Gastrocnemius medialis (tissue), 4 donors: ENCODE measurements at regions of chr1 and their contacts with region 1.

Region 1: DNA sequence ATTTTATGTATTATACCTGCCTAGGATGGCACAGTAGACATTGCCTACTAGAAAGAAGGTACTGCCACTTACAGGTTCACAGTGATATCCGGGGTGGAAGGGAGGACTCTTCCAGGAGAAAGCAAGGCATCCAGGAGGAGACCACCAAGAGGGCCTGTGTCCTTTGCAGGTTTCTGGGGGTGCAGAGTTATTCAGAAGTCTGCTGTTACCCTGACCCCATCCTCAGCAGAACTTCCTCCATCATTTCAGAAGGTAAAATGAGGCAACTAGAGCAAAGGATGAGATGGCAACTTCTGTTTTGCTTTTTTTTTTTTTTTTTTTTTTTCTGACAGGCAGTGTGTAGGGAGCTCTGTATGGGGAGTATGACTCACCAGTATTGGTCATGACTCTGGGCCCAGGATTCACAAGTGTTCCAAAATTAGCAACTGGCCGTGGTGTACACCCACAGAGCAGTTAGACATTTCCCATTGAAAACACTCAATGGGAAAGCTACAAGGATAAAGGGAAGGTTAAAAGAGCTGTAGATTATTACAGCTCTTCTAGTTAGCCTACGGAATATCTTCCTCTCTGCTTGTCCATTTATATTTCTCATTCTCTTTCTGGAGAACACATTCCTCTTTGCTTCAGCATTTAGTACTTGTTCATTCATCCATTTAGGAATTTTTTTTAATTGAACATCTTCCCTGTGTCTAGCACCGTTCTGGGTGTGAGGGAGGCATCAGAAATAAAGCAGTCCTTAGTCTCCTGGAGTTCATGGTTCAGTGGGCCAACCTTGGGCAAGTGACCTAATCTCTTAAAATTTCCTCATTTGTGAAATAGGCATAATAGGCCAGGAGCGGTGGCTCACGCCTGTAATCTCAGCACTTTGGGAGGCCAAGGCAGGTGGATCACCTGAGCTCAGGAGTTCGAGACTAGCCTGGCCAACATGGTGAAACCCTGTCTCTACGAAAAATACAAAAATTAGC is 50.5 kb upstream of the PPP2R5A start:
- DNase-seq: peak; percentile 74 to 82
- ATAC-seq: peak; percentile 96 to 97
- H3K4me3 ChIP-seq: no peak overlapping the region
- H3K27ac ChIP-seq: peak overlapping the region; percentile 80 to 90 (median 87)
- H3K4me1 ChIP-seq: peaks cover 35 to 51% of the 10 kb centered on the region in 2 donors
- H3K27me3 ChIP-seq: no peaks in the 10 kb centered on the region
- CTCF ChIP-seq: no peak
- POLR2A ChIP-seq: no peak

Region 2: DNA sequence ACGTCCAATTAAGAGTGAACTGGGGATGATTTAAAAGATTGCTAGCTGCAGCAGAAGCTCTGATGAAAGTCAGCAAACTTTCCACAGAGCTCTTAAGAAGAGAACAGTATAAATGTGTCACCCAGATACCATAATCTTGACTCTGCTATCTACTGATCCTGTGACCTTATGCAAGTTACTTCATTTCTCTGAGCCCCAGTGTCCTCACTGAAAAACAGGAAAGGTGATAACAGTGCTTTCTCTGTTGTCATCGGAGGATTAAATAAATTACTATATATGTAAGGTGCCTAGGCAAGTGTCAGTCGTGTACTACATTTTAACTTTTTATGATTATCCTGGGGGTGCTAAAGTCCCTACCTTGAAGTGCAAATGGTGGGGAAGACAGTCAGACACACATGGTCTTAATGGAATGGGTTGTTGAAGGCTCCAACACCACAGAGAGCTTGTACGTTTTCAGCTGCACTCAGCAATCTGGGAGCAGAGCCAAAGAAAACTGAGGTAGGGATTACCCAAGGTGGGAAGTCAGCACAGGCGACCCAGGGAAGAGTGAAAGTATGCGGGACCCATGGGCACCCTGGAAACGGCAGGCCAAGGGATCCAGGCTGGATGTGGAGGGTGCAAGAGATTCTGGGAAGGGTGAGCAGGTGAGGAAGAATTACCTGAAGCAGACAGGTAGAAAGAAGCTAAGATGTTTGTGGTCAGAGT is 116.4 kb before region 1 on chr1:
- in situ Hi-C with region 1: no loop called
- intact Hi-C with region 1: loop called (anchors 5 kb)
- DNase-seq: no peak
- ATAC-seq: no peak
- H3K4me3 ChIP-seq: no peak overlapping the region
- H3K27ac ChIP-seq: peak overlapping the region; percentile 84 to 94 (median 88)
- H3K4me1 ChIP-seq: peaks cover 30 to 38% of the 10 kb centered on the region in 2 donors
- H3K27me3 ChIP-seq: no peaks in the 10 kb centered on the region
- CTCF ChIP-seq: no peak
- POLR2A ChIP-seq: no peak

Region 3: GRCh38 chr1:212205843-212206242 is 28.9 kb before region 1 on chr1:
- in situ Hi-C with region 1: no loop called
- intact Hi-C with region 1: loop called (anchors 2 kb)
- DNase-seq: no peak
- ATAC-seq: no peak
- H3K4me3 ChIP-seq: no peak overlapping the region
- H3K27ac ChIP-seq: no peak overlapping the region
- H3K4me1 ChIP-seq: peaks cover 0 to 12% of the 10 kb centered on the region in 2 donors
- H3K27me3 ChIP-seq: no peaks in the 10 kb centered on the region
- CTCF ChIP-seq: no peak
- POLR2A ChIP-seq: no peak